ENCODE measurements at regions of chr6 and their contacts with region 1.

Region 1: DNA sequence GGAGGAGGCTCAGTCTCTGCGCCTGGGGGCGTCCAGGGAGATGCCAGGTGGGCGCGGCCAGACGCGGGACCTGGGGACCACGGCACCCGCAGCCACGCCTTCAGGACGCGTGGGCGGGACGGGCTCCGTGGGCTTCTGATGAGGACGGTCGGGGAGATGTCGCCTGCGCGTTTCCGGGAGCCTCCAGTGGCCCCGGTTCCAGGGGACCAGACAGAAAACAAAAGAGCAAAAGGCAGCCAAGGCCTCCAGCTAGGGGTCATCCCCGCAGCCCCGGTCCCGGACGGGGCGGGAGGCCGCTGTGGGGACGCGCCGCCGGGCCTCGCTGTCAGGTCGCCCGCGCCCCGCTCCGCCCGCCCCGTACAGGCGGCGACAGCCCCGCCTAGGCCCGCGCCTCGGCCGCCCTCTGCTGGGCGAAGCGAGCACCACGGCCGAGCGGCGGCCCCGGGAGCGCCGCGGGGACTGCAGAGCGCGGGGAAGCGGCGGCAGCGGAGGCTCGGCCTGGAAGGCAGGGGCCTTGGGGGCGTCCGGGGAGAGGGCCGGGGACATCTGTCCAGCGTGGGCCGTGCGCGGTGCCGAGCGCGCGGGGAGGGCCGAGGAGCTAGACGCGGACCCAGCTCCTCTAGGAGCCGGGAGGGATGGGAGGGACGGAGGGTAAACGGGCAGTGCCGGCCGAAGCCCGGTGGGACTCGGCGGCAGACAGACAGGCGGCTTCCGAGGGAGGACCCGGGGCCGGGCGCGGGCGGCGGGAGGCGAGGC is 48.7 kb downstream of the TMEM242 start:
- DNase-seq: peak; percentile 94
- ATAC-seq: peak; percentile 97

Region 2: DNA sequence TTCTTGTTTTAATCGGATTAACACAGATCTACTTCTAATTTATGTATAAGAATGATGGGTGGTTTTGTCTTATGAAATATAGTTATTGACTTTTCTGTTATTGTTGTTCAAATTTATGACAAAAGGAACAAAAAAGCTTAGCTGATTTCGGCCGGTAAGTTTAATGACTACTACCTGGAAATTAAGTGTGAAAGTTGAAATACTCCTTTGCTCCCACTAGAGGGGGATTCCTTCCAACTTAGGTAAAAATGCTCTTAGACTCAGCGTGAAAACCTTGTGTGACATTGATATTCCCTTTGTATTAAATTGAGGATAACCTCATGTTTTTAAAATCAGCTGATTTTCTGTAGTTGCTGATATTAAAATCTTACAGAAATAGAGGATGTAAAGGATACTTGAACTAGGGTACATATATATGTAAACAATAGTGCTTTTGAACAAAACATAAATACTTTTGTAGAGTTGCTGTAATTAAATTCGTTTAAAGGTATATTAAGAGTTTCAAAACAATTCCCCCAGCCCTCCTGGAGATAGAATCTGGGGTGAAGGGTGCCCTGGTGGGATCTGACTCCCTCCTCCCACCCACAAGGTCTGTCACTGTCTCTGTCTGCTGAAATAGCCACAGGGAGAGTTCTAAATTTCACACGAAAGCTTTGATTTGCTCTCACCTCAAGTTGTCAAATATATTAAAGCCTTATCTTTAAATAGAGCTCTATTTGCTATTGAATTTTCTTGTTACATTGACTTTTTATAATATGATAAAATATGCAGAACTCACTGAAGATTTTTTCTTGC is 240.0 kb before region 1 on chr6:
- intact Hi-C with region 1: loop called (anchors 5 kb)
- DNase-seq: no peak
- ATAC-seq: no peak

Region 3: DNA sequence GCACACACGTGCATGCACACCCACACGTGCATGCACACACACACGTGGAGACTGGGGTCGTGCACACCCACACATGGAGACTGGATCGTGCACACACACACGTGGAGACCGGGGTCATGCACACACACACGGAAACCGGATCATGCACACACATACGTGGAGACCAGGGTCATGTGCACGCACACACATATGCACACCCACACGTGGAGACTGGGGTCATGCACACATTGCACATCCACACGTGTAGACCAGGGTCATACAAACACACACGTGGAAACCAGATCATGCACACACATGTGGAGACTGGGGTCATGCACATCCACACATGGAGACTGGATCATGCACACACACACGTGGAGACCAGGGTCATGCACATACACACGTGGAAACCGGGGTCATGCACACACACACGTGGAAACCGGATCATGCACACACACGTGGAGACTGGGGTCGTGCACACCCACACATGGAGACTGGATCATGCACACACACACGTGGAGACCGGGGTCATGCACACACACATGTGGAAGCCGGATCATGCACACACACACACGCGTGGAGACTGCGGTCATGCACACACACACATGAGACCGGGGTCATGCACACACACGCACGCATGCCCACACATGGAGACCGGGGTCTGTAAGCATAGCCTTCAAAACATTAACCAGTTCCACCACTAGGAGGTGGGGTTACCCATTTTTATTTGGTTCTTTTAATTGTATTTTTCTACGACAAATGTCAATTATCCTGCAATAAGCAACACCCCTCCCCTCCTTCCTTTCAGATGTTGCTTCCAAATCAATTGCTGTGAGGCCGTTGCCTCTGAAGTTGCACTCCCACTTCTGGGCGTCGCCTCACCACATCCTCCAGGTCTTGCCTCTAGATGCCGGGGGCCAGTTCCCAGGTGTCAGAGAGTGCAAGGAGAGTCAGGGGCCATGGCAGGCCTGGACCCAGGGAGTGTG is 47.2 kb before region 1 on chr6:
- intact Hi-C with region 1: loop called (anchors 2 kb)
- DNase-seq: peak; percentile 56
- ATAC-seq: no peak